ENCODE measurements at regions of chr20 and their contacts with region 1.

Region 1: GRCh38 chr20:25294459-25295385 is 46.8 kb downstream of the PYGB start:
- DNase-seq: no peak
- ATAC-seq: no peak
- H3K4me3 ChIP-seq: no peak overlapping the region
- H3K27ac ChIP-seq: no peak overlapping the region
- H3K4me1 ChIP-seq: no peaks in the 10 kb centered on the region
- H3K27me3 ChIP-seq: no peaks in the 10 kb centered on the region

Region 2: GRCh38 chr20:25195014-25195961 is 99.4 kb before region 1 on chr20 and contains the start of gene ENTPD6:
- intact Hi-C with region 1: loop called in 1 of 2 experiments (anchors 10 kb)
- DNase-seq: peak; percentile 95 to 97
- ATAC-seq: peak; percentile 97
- H3K4me3 ChIP-seq: peak within 1 kb of the TSS; percentile 69 to 77
- H3K27ac ChIP-seq: peak within 1 kb of the TSS in 1 of 2 donors; percentile 43
- H3K4me1 ChIP-seq: peaks cover 0 to 3% of the 10 kb centered on the region in 2 donors
- H3K27me3 ChIP-seq: no peaks in the 10 kb centered on the region
- total RNA-seq, gene ENTPD6: 68.8 to 69.8 TPM

Region 3: DNA sequence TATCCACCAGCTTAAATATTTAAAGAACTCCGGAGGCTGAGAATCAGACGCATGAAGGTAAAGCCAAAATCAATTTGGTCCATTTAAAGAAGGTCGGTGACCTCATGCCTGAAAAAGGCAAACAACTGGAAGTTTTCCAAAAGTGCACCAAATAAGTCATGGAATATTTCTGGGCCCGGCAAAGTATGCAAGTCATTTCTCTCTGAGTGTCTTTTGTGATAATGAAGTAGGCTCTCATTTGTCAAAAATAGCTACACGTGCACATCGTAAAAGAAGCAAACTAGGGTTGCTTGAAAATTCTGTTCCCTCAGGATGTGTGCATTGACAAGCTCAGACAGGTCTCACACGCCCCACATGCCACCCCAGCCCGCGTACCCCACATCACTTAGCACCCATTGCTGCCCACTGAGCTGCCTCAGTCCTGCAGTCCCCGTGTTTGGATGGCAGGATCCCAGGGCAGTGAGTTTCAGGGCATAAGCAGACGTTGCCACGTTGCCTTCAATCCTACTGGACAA is 67.3 kb before region 1 on chr20:
- intact Hi-C with region 1: loop called in 1 of 2 experiments (anchors 2 kb)
- DNase-seq: peak in 1 of 2 donors; percentile 64
- ATAC-seq: peak; percentile 72
- H3K4me3 ChIP-seq: no peak overlapping the region
- H3K27ac ChIP-seq: peak overlapping the region; percentile 86 to 98
- H3K4me1 ChIP-seq: no peaks in the 10 kb centered on the region
- H3K27me3 ChIP-seq: no peaks in the 10 kb centered on the region

Region 4: DNA sequence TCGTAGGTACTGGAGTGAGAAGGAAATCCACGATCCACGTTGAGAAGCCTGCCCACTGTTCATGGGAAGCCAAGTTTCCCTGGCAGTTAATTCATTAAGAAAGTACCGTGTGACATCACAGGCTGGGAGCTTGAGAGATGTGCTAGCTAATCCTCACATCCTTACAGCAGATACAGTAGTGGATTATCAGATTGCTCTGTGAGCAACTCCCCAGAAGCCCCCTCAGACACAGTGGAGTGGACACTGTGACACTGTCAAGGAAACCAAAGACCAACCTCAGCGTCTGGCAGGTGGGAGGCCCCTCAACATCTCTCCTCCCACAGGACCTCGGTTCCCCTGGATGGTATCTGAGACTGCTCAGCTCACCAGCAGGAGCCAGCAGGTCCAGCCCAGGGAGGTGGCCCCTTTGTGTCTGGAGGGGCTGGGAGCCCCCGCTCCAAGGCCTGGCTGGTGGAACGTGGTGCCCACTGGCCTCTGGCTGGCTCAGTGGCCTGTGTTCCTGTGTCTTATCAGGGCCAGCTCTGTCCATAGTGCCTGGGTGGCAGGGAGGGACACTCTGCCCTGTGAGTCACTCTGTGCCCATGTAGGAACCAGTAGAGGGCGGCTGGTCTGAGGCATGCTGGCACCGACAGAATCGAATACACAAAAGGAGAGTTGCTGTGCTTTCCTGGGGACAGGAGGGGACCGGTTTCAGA is 39.6 kb before region 1 on chr20:
- intact Hi-C with region 1: loop called in 1 of 2 experiments (anchors 5 kb)
- DNase-seq: peak; percentile 76 to 77
- ATAC-seq: peak; percentile 76
- H3K4me3 ChIP-seq: no peak overlapping the region
- H3K27ac ChIP-seq: peak overlapping the region in 1 of 2 donors; percentile 2
- H3K4me1 ChIP-seq: peaks cover 0 to 2% of the 10 kb centered on the region in 2 donors
- H3K27me3 ChIP-seq: no peaks in the 10 kb centered on the region

Region 5: DNA sequence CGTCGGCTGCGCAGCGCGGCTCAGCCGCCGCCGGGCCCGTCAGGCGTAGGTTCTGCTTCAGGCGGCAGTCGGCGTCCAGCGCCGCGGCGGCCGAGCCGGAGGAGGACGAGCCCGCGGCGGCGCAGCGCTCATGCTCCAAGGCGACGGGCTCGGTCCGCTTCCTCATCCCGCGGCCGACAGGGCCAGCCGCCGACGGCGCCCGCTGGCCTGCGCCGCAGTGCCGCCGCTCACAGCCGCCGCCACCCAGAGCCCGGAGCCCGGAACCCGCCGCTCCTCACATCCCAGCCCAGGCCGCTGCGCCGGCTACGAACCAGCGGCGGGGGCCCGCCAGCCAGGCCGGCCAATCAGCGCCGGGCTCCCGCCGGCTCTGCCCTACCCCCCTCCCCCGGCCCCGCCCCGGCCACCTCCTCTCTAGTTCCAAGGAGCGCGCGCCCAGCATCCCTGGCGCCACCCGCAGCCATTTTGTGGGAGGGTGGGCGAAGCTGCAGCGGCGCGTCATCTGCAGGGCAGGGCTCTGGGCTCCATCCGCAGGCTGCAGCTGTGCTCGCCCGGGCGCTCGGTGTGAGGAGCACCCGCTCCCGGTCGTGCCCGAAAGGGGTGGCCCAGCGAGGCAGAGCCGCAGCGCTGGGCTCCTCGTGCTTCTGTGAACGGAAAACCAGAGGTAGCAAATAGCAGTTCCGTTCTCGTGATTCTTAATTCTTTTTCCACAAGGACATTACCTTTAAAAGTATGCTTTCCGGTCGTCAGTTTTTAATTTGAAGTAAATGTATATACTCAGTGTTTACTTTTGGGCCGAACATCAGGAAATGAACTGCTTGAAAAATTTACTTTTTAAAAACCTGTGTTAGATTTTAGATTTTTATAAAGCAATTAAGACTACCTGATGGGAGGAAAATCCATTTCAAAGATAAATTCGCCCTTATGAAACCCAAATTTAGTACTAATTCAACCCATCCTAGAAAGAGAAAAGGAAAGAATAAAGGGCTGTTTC is 96.1 kb after region 1 on chr20 and contains the start of gene ABHD12:
- intact Hi-C with region 1: loop called (anchors 2 to 5 kb)
- DNase-seq: peak; percentile 98 to 99
- ATAC-seq: peak; percentile 99
- H3K4me3 ChIP-seq: peak within 1 kb of the TSS; percentile 70 to 76
- H3K27ac ChIP-seq: peak within 1 kb of the TSS in 1 of 2 donors; percentile 81
- H3K4me1 ChIP-seq: no peaks in the 10 kb centered on the region
- H3K27me3 ChIP-seq: no peaks in the 10 kb centered on the region
- total RNA-seq, gene ABHD12: 31.6 to 32.3 TPM

Region 6: GRCh38 chr20:25399037-25399430 is 104.3 kb after region 1 on chr20:
- intact Hi-C with region 1: loop called (anchors 2 to 5 kb)
- DNase-seq: no peak
- ATAC-seq: peak; percentile 81
- H3K4me3 ChIP-seq: no peak overlapping the region
- H3K27ac ChIP-seq: no peak overlapping the region
- H3K4me1 ChIP-seq: no peaks in the 10 kb centered on the region
- H3K27me3 ChIP-seq: no peaks in the 10 kb centered on the region